ENCODE measurements at regions of chr7 and their contacts with region 1.

Region 1: DNA sequence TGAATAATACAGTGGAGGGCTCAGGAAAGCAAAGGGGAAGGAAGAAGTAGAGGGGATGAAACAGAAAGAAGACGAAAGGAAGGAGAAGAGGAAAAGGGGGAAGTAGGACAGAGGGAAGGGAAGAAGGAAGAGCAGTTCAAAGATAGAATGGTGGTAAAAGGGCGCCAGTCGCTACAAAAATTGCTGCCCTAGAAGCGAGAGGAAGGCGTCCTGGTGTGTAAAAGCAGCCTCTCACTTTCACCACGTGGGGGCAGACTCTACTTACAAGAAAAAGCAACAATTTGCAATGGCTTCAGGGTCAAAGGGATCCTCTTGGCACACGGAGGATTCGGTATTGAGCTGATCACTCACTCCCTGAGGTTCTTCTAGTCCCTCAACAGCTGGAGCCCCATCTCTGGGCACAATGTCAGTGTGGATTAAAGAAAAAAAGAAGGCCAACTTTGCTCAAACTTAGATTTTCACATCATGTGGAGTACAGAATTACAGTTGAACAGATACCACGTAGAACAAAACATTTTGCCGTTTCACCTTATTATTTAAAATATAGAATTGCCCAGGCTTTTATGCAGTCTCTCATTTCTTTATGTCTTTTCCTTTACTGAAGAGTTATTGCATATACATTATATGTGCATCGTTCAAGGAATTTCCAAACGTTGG is 31.4 kb upstream of the NPVF start:
- DNase-seq: peak; percentile 79
- H3K4me3 Mint-ChIP-seq: no peak overlapping the region
- H3K27ac Mint-ChIP-seq: no peak overlapping the region
- H3K4me1 Mint-ChIP-seq: peaks cover 30% of the 10 kb centered on the region
- H3K27me3 Mint-ChIP-seq: peaks cover 15% of the 10 kb centered on the region

Region 2: GRCh38 chr7:25389489-25390106 is 129.9 kb after region 1 on chr7:
- CTCF ChIA-PET with region 1: interaction called, 106 read pairs
- DNase-seq: peak; percentile 24
- H3K4me3 Mint-ChIP-seq: no peak overlapping the region
- H3K27ac Mint-ChIP-seq: no peak overlapping the region
- H3K4me1 Mint-ChIP-seq: no peaks in the 10 kb centered on the region
- H3K27me3 Mint-ChIP-seq: peaks cover 14% of the 10 kb centered on the region

Region 3: GRCh38 chr7:25395976-25396375 is 136.3 kb after region 1 on chr7:
- CTCF ChIA-PET with region 1: interaction called, 106 read pairs
- DNase-seq: no peak
- H3K4me3 Mint-ChIP-seq: no peak overlapping the region
- H3K27ac Mint-ChIP-seq: no peak overlapping the region
- H3K4me1 Mint-ChIP-seq: no peaks in the 10 kb centered on the region
- H3K27me3 Mint-ChIP-seq: peaks cover 13% of the 10 kb centered on the region

Region 4: GRCh38 chr7:25565949-25566348 is 306.2 kb after region 1 on chr7:
- CTCF ChIA-PET with region 1: interaction called, 130 read pairs
- DNase-seq: peak; percentile 70
- H3K4me3 Mint-ChIP-seq: no peak overlapping the region
- H3K27ac Mint-ChIP-seq: peak overlapping the region; percentile 25
- H3K4me1 Mint-ChIP-seq: peaks cover 2% of the 10 kb centered on the region
- H3K27me3 Mint-ChIP-seq: peaks cover 4% of the 10 kb centered on the region

Region 5: DNA sequence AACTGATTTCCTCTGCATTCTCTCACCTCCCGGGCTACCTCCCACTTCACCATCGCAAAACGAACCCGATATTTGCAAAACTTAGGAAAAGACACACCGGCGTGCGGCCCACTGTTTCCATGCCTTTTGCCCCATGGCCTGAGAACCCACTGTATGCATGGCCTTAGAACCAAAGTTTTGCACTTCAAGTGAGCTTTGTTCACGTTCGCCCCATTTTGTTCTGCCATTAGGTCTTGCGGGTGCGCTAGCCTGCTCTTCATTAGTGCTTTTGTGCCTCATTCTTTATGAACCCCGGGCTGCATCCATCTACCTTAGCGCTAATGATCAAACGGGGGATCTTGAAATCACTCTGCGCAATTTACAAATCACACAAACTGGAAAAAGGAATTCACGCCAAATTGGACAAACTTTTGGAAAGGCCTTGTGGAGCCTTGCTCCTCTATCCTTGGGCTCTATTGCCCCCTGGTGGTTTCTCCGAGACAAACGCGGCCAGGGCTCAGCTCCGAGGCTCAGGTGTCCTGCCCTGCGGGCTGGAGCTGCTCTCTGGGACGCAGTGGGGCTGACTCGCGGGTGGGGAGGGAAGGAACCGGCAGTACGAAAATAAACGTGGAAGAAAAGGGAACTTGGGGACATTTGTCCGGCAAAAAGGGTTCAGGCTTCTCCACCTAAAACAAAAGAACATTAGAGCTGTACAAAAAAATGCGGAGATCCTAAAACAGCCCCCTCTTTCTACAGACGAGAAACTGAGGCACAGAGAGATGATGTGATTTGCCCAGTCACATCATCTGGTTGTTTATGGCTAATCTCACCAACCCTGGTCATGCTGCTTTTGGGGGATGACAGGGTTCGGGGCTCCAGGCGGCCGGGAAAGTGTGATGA is 591.9 kb after region 1 on chr7:
- CTCF ChIA-PET with region 1: interaction called, 12 read pairs
- DNase-seq: peak; percentile 76
- H3K4me3 Mint-ChIP-seq: peak overlapping the region; percentile 59
- H3K27ac Mint-ChIP-seq: peak overlapping the region; percentile 62
- H3K4me1 Mint-ChIP-seq: peaks cover 26% of the 10 kb centered on the region
- H3K27me3 Mint-ChIP-seq: peaks cover 60% of the 10 kb centered on the region

Measured in activated naive CD4-positive, alpha-beta T cell treated with anti-CD3 and anti-CD28 coated beads, Interleukin-2, amount 10 ng/mL, durations not matched to agents 7 days and 5 days (primary cell).